SK-N-SH (cell line): ENCODE measurements at regions of chr2 and their contacts with region 1.

Region 1: GRCh38 chr2:72150157-72150865 is 2.6 kb upstream of the CYP26B1 start:
- DNase-seq: peak; percentile 87
- H3K4me3 ChIP-seq: peak overlapping the region; percentile 35 to 43
- H3K27ac ChIP-seq: no peak overlapping the region
- H3K4me1 ChIP-seq: peaks cover 5 to 26% of the 10 kb centered on the region in 2 experiments; a peak in 2 of 4 replicates
- H3K27me3 ChIP-seq: peaks cover 39% of the 10 kb centered on the region
- CTCF ChIP-seq: peak; percentile 74
- EP300 ChIP-seq: no peak
- RAD21 ChIP-seq: peak; percentile 88

Region 2: DNA sequence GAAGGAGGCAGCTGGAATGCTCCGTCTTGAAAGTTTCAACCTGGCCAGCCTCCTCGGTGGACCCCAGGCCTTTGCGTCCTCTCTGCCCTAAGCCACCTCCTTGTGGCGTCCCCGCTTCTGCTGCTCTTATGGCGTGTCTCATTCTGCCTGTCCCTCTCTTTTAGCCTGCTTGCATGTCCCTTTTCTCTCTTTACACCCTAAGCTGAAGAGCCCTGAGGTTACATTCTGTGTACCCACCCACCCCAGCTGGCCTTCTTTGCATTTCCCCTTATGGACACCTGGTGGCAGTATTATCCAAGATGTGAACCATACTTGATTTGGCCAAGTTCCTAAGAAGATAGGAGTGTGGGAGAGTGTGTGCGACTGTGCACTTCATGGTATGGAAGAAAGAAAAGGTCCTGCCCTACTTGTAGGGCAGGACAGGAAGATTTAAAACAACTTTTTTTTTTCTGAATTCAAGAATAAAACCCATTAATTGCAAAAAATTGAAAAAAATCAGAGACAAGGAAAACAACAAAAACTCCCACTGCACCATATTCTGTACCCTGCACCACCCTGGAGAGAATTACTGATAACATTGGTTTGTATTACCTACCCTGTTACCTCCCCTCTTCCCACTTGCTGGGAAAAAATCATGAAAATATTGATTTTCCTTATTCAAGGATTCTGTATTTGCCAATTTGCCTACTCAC is 619.5 kb before region 1 on chr2:
- CTCF ChIA-PET with region 1: interaction called, 14 read pairs
- POLR2A ChIA-PET with region 1: no interaction called
- DNase-seq: peak; percentile 83
- H3K4me3 ChIP-seq: no peak overlapping the region; a peak in 1 of 4 replicates
- H3K27ac ChIP-seq: no peak overlapping the region
- H3K4me1 ChIP-seq: no peaks in the 10 kb centered on the region
- H3K27me3 ChIP-seq: peaks cover 11% of the 10 kb centered on the region; the same call in 1 of the 2 replicates
- CTCF ChIP-seq: peak; percentile 71
- EP300 ChIP-seq: no peak
- RAD21 ChIP-seq: peak; percentile 79

Region 3: GRCh38 chr2:71545572-71546274 is 604.6 kb before region 1 on chr2:
- CTCF ChIA-PET with region 1: interaction called, 70 read pairs
- POLR2A ChIA-PET with region 1: no interaction called
- DNase-seq: peak; percentile 82
- H3K4me3 ChIP-seq: peak overlapping the region; percentile 12 to 19; a peak in 2 of 4 replicates
- H3K27ac ChIP-seq: no peak overlapping the region
- H3K4me1 ChIP-seq: no peaks in the 10 kb centered on the region; a peak in 1 of 4 replicates
- H3K27me3 ChIP-seq: no peaks in the 10 kb centered on the region; the same call in 1 of the 2 replicates
- CTCF ChIP-seq: peak; percentile 81
- EP300 ChIP-seq: no peak
- RAD21 ChIP-seq: peak; percentile 97

Region 4: DNA sequence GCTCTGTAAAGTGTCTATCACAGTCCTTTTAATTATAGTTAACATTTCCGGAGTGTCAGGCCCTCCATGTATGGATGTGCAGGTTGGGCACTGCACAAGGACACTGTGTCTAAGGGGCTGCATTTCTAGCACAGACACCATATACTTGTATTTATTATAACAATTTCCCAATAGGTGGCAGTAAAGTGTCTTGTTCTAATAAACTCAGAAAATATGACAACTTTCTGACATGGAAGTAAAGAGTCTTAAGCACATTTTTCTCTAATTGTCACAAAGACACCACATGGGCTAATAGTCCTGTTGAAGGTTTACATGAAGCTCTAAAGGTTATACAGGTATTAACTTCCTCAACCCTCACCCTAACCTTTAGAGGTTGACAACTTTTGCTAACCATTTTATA is 540.4 kb before region 1 on chr2:
- CTCF ChIA-PET with region 1: interaction called, 11 read pairs
- POLR2A ChIA-PET with region 1: no interaction called
- DNase-seq: peak; percentile 56
- H3K4me3 ChIP-seq: no peak overlapping the region
- H3K27ac ChIP-seq: no peak overlapping the region
- H3K4me1 ChIP-seq: peaks cover 0 to 5% of the 10 kb centered on the region in 2 experiments; a peak in 1 of 4 replicates
- H3K27me3 ChIP-seq: no peaks in the 10 kb centered on the region
- CTCF ChIP-seq: peak; percentile 51
- EP300 ChIP-seq: no peak
- RAD21 ChIP-seq: peak; percentile 63

Region 5: GRCh38 chr2:71872466-71873051 is 277.8 kb before region 1 on chr2:
- CTCF ChIA-PET with region 1: interaction called, 11 read pairs
- POLR2A ChIA-PET with region 1: no interaction called
- DNase-seq: no peak
- H3K4me3 ChIP-seq: no peak overlapping the region
- H3K27ac ChIP-seq: no peak overlapping the region
- H3K4me1 ChIP-seq: no peaks in the 10 kb centered on the region
- H3K27me3 ChIP-seq: no peaks in the 10 kb centered on the region
- CTCF ChIP-seq: no peak
- EP300 ChIP-seq: no peak
- RAD21 ChIP-seq: no peak

Region 6: GRCh38 chr2:71933467-71934319 is 216.6 kb before region 1 on chr2:
- CTCF ChIA-PET with region 1: interaction called, 167 read pairs
- POLR2A ChIA-PET with region 1: no interaction called
- DNase-seq: peak; percentile 6
- H3K4me3 ChIP-seq: no peak overlapping the region
- H3K27ac ChIP-seq: no peak overlapping the region
- H3K4me1 ChIP-seq: peaks cover 0 to 10% of the 10 kb centered on the region in 2 experiments; a peak in 1 of 4 replicates
- H3K27me3 ChIP-seq: no peaks in the 10 kb centered on the region
- CTCF ChIP-seq: peak; percentile 31
- EP300 ChIP-seq: no peak
- RAD21 ChIP-seq: no peak

Region 7: DNA sequence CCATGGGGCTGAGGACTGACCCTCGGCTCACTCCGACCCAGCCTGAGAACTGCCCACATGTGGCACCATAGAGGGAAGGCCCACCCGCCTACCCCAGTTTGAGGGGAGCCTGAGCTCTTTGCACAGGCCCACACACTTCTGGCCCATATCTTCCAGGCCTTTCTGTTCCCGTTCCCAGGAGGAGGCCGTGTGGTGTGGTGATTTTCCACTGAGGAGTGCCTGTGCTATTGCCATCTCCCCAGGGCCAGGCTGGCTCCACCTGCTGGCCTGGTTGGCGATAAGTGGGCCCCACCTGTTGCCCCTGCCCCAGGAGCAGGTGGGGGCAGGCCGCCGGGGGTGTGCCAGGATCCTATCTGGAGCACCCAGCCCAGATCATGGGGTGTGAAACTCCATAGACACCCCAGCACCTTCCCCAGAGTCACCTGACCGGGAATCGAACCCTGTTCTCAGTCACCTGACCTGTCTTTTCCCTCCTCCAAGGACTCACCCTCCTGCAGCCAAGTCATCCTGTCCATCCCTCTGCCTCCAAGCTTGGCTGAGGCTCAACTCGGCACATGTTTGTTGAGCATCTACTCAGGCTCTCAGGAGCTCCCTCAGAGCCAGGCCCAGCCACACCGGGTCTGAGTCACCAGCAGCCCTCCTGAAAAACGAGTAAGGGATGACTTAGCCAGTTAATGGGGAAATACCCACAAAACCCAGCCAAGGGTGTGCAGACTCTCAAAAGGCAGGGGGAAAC is 122.7 kb before region 1 on chr2:
- CTCF ChIA-PET with region 1: no interaction called
- POLR2A ChIA-PET with region 1: no interaction called
- DNase-seq: no peak
- H3K4me3 ChIP-seq: no peak overlapping the region
- H3K27ac ChIP-seq: no peak overlapping the region
- H3K4me1 ChIP-seq: no peaks in the 10 kb centered on the region
- H3K27me3 ChIP-seq: no peaks in the 10 kb centered on the region; the same call in 1 of the 2 replicates
- CTCF ChIP-seq: no peak
- EP300 ChIP-seq: no peak
- RAD21 ChIP-seq: no peak

Region 8: DNA sequence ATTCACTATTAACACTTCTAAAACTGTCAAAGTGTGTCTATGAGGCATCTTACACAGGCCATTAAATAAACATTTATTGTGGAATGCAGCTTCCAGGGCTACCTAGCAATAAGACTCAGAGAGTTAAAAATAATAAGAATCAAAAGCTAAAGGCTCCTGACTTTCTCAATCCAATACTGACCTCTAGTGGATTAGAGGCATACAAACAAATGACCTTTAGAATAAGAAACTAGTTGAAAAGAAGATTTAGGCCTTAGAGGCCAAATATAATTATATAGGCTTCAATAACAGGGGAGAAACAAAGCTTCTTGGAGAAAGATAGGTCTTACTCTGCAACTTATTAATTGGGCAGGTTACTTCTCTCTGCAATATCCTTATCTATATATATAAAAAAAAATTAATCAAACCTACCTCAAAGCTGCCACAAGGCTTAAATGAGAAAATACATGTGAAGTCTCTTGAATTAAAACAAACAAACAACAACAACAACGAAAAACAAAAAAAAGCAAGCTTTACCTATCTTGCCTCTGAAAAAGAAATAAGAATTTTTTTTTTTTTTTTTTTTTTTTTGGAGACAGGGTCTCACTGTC is 429.4 kb after region 1 on chr2:
- CTCF ChIA-PET with region 1: interaction called, 87 read pairs
- POLR2A ChIA-PET with region 1: no interaction called
- DNase-seq: peak; percentile 27
- H3K4me3 ChIP-seq: no peak overlapping the region
- H3K27ac ChIP-seq: no peak overlapping the region
- H3K4me1 ChIP-seq: peaks cover 0 to 31% of the 10 kb centered on the region in 2 experiments; a peak in 1 of 4 replicates
- H3K27me3 ChIP-seq: no peaks in the 10 kb centered on the region
- CTCF ChIP-seq: peak; percentile 83
- EP300 ChIP-seq: no peak
- RAD21 ChIP-seq: peak; percentile 88